ENCODE measurements at regions of chr7 and their contacts with region 1.

Region 1: DNA sequence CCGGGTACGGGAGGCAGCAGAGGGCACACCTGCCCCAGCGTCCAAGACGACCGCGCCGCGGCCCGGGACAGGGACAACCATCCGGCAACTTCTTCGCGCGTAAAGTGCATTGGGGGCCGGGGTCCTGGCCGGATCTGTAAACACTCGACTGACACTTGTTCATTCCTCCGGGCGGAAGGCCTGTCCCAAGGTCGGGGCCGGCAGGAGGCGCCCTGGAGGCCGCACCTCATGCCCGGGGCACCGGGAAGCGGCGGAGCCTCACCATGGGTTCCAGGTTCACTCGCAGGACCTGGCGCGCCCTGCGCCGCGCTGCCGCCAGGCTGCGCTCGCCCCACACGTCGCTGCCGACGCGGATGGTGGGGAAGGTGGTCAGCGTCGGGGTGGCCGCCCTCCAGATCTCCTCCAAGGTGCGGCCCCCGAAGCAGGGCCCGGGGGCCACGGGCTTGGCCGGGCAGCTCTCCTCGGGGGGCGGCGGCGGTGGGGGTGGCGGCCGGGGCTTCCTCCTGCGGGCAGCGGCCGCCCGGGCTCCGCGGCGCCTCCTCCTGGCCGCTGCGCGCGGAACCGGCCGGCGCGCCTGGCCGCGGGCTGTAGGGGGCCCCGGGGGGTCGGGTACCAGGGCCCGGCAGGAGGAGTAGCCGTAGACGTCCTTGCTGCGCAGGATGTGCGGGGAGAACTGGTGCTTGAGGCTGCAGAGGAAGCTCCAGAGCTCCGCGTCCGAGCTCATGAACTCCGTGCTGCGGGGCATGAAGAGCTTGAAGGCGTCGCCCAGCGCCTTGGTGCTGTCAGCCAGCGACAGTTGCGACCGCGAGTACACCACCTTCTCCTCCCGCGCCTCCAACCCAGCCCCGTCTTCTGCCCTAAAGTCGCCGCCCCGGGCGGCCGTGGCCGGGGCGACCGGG is 746 bp downstream of the CCDC71L start:
- DNase-seq: peak; percentile 59 to 88 (median 75)
- ATAC-seq: peak; percentile 46
- H3K4me3 ChIP-seq: peak overlapping the region; percentile 76 to 87
- H3K4me3 Mint-ChIP-seq: peak overlapping the region; percentile 96
- H3K27ac ChIP-seq: peak overlapping the region; percentile 65 to 70
- H3K27ac Mint-ChIP-seq: peak overlapping the region; percentile 89
- H3K4me1 ChIP-seq: peaks cover 15% of the 10 kb centered on the region
- H3K4me1 Mint-ChIP-seq: peaks cover 37% of the 10 kb centered on the region
- H3K27me3 ChIP-seq: no peaks in the 10 kb centered on the region
- H3K27me3 Mint-ChIP-seq: no peaks in the 10 kb centered on the region
- CTCF ChIP-seq: peak; percentile 82

Region 2: DNA sequence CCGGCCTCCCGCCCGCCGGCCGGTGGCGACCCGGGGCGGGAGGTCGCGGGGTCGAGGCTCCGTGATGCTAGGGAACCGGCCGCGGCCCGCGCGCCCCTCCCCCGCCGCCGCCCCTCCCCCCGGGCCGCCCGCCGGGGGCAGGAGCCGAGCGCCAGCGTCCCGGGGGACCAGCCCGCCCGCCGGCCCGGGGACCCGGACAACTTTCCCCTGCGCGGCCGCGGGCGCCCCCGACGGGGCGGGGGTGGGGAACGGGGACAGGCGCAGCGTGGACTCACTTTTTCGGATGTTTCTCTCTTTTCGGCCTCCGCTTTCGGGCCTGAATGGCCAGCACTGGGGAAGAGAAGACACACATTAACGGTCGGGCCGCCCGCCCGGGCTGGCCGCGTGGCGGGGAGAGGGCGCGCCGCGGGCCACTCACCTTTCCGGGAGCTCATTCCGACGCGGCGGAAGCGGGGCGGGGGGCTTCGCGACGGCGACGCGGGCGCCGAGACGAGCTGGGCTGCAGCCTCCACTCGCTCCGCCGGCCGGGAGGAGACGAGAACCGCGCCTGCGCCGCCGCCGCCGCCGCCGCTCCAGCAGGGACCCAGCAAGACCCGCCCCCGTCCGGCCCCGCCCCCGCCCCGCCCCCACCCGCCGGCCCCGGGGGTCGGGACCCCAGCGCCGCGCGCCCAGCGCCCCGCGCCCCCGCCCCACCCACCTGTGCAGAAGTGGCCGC is 1271.7 kb before region 1 on chr7 and contains the start of gene SRPK2:
- CTCF ChIA-PET with region 1: no interaction called
- POLR2A ChIA-PET with region 1: no interaction called
- intact Hi-C with region 1: loop called in 1 of 2 experiments (anchors 5 kb)
- DNase-seq: peak; percentile 39 to 86 (median 76)
- ATAC-seq: peak; percentile 80
- H3K4me3 ChIP-seq: peak within 1 kb of the TSS; percentile 65 to 85
- H3K4me3 Mint-ChIP-seq: peak within 1 kb of the TSS; percentile 95
- H3K27ac ChIP-seq: peak within 1 kb of the TSS; percentile 59
- H3K27ac Mint-ChIP-seq: peak within 1 kb of the TSS; percentile 95
- H3K4me1 ChIP-seq: peaks cover 14% of the 10 kb centered on the region
- H3K4me1 Mint-ChIP-seq: peaks cover 40% of the 10 kb centered on the region
- H3K27me3 ChIP-seq: no peaks in the 10 kb centered on the region
- H3K27me3 Mint-ChIP-seq: no peaks in the 10 kb centered on the region
- CTCF ChIP-seq: no peak
- total RNA-seq, gene SRPK2: 29.2 to 29.7 TPM

Region 3: GRCh38 chr7:106598663-106599342 is 61.4 kb before region 1 on chr7:
- CTCF ChIA-PET with region 1: interaction called, 4 read pairs
- POLR2A ChIA-PET with region 1: no interaction called
- intact Hi-C with region 1: loop called (anchors 1 to 2 kb)
- DNase-seq: peak; percentile 26 to 87 (median 62)
- ATAC-seq: peak; percentile 99
- H3K4me3 ChIP-seq: peak overlapping the region in 1 of 2 experiments; percentile 26
- H3K4me3 Mint-ChIP-seq: peak overlapping the region; percentile 59
- H3K27ac ChIP-seq: no peak overlapping the region
- H3K27ac Mint-ChIP-seq: no peak overlapping the region
- H3K4me1 ChIP-seq: peaks cover 4% of the 10 kb centered on the region
- H3K4me1 Mint-ChIP-seq: peaks cover 6% of the 10 kb centered on the region
- H3K27me3 ChIP-seq: no peaks in the 10 kb centered on the region
- H3K27me3 Mint-ChIP-seq: no peaks in the 10 kb centered on the region
- CTCF ChIP-seq: no peak

Region 4: DNA sequence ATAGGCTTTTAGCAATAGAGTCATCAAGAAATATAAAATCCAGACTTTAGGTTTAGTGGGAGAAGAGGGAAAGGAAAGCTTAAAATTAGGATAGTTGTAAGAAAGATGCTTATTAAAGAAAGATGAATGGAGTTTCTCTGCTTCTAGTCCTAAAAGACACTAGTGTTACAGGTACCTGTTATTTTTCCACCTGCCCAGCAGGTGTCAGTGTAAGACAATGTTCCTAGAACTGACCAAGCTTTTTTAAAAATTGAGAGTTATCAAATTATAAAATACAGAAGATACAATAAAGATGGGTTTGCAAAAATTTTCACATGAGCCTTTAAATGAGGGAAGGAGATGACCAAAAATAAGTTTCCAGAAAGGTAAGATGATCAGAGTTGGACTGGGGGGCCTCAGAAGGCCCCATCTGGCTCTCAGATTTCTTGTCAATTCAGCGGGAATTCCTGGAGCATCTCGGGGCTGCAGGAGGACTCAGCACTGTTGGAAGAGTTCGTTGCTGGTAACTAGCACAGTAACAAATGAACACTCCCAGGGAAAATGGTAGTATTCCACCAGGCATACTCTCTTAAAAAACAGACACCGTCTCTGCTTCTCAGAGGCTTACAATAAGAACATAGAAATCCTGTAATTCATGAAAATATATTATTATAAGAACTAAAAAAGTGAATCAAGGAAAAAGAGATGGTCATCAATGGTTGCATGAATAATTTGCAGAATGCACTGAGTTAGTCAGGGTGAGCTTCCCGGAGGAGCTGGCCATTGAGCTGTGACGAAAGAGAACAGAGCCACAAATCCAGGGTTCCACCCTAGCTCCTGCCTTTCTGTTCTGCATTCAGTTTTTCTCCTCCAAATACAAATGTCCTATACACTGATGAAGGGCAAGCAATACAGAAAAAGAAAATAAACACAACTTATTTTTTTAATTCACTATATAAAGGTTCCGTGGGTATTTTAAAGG is 133.1 kb after region 1 on chr7:
- CTCF ChIA-PET with region 1: no interaction called
- POLR2A ChIA-PET with region 1: no interaction called
- intact Hi-C with region 1: loop called (anchors 5 kb)
- DNase-seq: peak in 6 of 9 experiments; percentile 16 to 75 (median 42)
- ATAC-seq: peak; percentile 82
- H3K4me3 ChIP-seq: no peak overlapping the region
- H3K4me3 Mint-ChIP-seq: no peak overlapping the region
- H3K27ac ChIP-seq: no peak overlapping the region
- H3K27ac Mint-ChIP-seq: no peak overlapping the region
- H3K4me1 ChIP-seq: no peaks in the 10 kb centered on the region
- H3K4me1 Mint-ChIP-seq: peaks cover 3% of the 10 kb centered on the region
- H3K27me3 ChIP-seq: no peaks in the 10 kb centered on the region
- H3K27me3 Mint-ChIP-seq: no peaks in the 10 kb centered on the region
- CTCF ChIP-seq: peak; percentile 88

Region 5: DNA sequence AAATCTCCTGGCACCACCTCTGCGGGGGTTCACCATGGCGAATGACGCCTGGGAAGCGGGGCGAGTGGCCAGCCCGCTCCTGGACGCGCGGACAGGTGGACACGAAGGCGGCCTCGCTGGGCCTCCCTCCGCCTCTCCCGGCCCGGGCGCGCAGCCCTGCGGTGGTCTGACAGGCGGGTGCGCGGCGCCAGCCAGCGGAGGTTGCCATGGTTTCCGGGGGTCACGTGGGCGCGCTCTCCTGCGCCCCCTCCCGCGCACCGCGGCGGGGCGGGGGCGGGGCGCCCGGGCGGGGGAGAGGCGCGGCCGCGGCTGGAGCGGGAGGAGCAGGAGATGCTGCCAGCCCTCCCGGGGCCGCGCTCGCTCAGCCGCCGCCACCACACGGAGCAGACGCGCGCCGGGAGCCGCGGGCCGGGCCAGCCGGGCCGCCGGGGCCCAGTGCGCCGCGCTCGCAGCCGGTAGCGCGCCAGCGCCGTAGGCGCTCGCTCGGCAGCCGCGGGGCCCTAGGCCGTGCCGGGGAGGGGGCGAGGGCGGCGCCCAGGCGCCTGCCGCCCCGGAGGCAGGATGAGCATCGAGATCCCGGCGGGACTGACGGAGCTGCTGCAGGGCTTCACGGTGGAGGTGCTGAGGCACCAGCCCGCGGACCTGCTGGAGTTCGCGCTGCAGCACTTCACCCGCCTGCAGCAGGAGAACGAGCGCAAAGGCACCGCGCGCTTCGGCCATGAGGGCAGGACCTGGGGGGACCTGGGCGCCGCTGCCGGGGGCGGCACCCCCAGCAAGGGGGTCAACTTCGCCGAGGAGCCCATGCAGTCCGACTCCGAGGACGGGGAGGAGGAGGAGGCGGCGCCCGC is 384.4 kb after region 1 on chr7 and contains the start of gene PRKAR2B:
- CTCF ChIA-PET with region 1: no interaction called
- POLR2A ChIA-PET with region 1: no interaction called
- intact Hi-C with region 1: loop called (anchors 5 to 10 kb)
- DNase-seq: peak; percentile 55 to 91 (median 80)
- ATAC-seq: peak; percentile 93
- H3K4me3 ChIP-seq: peak within 1 kb of the TSS; percentile 50 to 58
- H3K4me3 Mint-ChIP-seq: peak within 1 kb of the TSS; percentile 86
- H3K27ac ChIP-seq: no peak within 1 kb of the TSS
- H3K27ac Mint-ChIP-seq: no peak within 1 kb of the TSS
- H3K4me1 ChIP-seq: peaks cover 13% of the 10 kb centered on the region
- H3K4me1 Mint-ChIP-seq: peaks cover 10% of the 10 kb centered on the region
- H3K27me3 ChIP-seq: peaks cover 7% of the 10 kb centered on the region in 2 experiments
- H3K27me3 Mint-ChIP-seq: peaks cover 7% of the 10 kb centered on the region
- CTCF ChIP-seq: no peak
- total RNA-seq, gene PRKAR2B: 0.33 to 0.60 TPM

Region 6: GRCh38 chr7:107743567-107744344 is 1083.5 kb after region 1 on chr7 and contains the start of gene CBLL1:
- CTCF ChIA-PET with region 1: no interaction called
- POLR2A ChIA-PET with region 1: no interaction called
- intact Hi-C with region 1: loop called (anchors 5 kb)
- DNase-seq: peak; percentile 96 to 99 (median 98)
- ATAC-seq: peak; percentile 91
- H3K4me3 ChIP-seq: peak within 1 kb of the TSS; percentile 90 to 99
- H3K4me3 Mint-ChIP-seq: peak within 1 kb of the TSS; percentile 92
- H3K27ac ChIP-seq: peak within 1 kb of the TSS; percentile 99
- H3K27ac Mint-ChIP-seq: peak within 1 kb of the TSS; percentile 100
- H3K4me1 ChIP-seq: peaks cover 46% of the 10 kb centered on the region
- H3K4me1 Mint-ChIP-seq: peaks cover 59% of the 10 kb centered on the region
- H3K27me3 ChIP-seq: no peaks in the 10 kb centered on the region
- H3K27me3 Mint-ChIP-seq: no peaks in the 10 kb centered on the region
- CTCF ChIP-seq: peak; percentile 68
- total RNA-seq, gene CBLL1: 68.5 to 71.6 TPM

Measured in CD8-positive, alpha-beta T cell (primary cell).